PC-3 (cell line): ENCODE measurements at regions of chr1 and their contacts with region 1.

Region 1: GRCh38 chr1:29639741-29640427 is 403.6 kb downstream of the PTPRU start:
- DNase-seq: peak; percentile 76
- ATAC-seq: peak; percentile 70
- H3K4me3 ChIP-seq: no peak overlapping the region
- H3K27ac ChIP-seq: peak overlapping the region; percentile 58
- H3K4me1 ChIP-seq: peaks cover 45% of the 10 kb centered on the region
- H3K27me3 ChIP-seq: no peaks in the 10 kb centered on the region
- CTCF ChIP-seq: no peak

Region 2: GRCh38 chr1:29230553-29231378 is 409.1 kb before region 1 on chr1 and contains the start of gene MECR:
- CTCF ChIA-PET with region 1: no interaction called
- POLR2A ChIA-PET with region 1: no interaction called
- intact Hi-C with region 1: loop called (anchors 10 kb)
- DNase-seq: peak; percentile 92
- ATAC-seq: peak; percentile 94
- H3K4me3 ChIP-seq: peak within 1 kb of the TSS; percentile 85
- H3K27ac ChIP-seq: peak within 1 kb of the TSS; percentile 2; the same call in 1 of the 2 replicates
- H3K4me1 ChIP-seq: peaks cover 10% of the 10 kb centered on the region
- H3K27me3 ChIP-seq: no peaks in the 10 kb centered on the region
- CTCF ChIP-seq: peak; percentile 43; the same call in 1 of the 2 replicates
- total RNA-seq, gene MECR: 25.3 and 30.5 TPM in 2 replicates

Region 3: DNA sequence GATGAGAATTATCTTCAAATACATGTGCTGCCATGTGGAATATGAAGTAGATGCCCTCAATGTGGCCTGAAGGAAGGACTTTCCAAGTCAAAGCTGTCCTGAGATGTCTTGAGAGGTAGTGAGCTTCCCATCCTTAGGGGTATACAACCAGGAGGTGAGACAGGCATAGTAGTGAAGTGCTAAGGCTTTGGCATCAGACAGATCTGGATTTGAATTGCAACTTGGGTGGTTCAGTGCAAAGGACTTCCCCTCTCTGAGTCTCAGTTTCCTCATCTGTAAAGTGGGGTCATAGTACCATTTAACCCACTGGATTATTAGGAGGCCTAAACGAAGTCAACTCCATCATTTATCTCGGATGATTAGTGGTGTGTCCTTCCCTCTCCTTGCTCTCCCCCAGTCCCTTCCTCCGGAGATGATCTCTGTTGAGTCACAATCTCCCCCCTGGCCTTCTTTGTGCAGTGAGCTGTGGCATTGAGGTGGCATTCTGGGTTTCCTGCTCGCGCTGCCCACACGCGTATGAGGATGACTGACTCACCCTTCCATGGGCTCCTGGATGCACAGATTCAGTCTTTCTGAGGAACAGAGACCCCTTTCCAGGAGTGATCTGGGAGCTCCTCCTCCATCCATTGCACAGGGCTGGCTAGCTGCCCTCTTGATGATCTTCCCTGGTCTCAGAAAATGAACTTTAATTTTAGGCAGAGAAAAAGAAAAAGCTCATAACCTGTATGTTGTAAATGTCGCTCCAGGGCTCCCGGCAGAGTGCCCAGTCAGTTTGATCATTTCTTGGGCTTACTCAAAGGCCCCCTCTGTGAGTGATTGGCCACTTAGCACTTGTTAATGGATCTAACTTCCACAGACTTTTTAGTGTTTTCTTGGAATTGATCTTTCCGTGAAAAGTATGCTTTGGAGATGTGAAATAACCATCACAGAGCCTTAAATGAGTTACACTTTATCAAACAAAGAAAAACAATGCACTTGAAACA is 49.0 kb before region 1 on chr1:
- CTCF ChIA-PET with region 1: no interaction called
- POLR2A ChIA-PET with region 1: interaction called, 3 read pairs
- intact Hi-C with region 1: loop called (anchors 1 kb)
- DNase-seq: peak; percentile 97
- ATAC-seq: peak; percentile 94
- H3K4me3 ChIP-seq: no peak overlapping the region
- H3K27ac ChIP-seq: peak overlapping the region; percentile 86
- H3K4me1 ChIP-seq: peaks cover 38% of the 10 kb centered on the region
- H3K27me3 ChIP-seq: no peaks in the 10 kb centered on the region
- CTCF ChIP-seq: no peak

Region 4: DNA sequence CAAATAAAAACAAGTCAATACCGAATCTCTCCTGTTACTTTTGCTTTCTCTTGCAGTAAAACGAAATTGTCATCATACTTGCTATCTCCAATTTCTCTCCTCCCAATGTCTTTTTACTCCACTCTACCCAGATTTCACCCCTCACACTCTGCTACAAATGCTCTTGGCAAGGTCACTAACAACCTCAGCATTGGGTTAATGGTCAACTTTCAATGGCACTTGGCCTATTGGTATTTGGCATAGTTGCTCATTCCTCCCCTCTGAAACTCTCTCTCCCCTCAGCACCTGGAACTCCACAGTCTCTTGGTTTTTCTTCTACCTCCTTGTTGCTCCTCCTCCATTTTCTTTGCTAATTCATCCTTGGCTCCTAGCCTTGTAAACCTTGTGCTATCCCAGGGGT is 36.3 kb before region 1 on chr1:
- CTCF ChIA-PET with region 1: no interaction called
- POLR2A ChIA-PET with region 1: no interaction called
- intact Hi-C with region 1: no loop called
- DNase-seq: no peak
- ATAC-seq: no peak
- H3K4me3 ChIP-seq: no peak overlapping the region
- H3K27ac ChIP-seq: no peak overlapping the region
- H3K4me1 ChIP-seq: no peaks in the 10 kb centered on the region
- H3K27me3 ChIP-seq: no peaks in the 10 kb centered on the region
- CTCF ChIP-seq: no peak

Region 5: GRCh38 chr1:29682919-29683295 is 43.0 kb after region 1 on chr1:
- CTCF ChIA-PET with region 1: interaction called, 3 read pairs
- POLR2A ChIA-PET with region 1: no interaction called
- intact Hi-C with region 1: loop called (anchors 2 kb)
- DNase-seq: peak; percentile 83
- ATAC-seq: peak; percentile 93
- H3K4me3 ChIP-seq: no peak overlapping the region
- H3K27ac ChIP-seq: peak overlapping the region; percentile 60
- H3K4me1 ChIP-seq: peaks cover 29% of the 10 kb centered on the region
- H3K27me3 ChIP-seq: no peaks in the 10 kb centered on the region
- CTCF ChIP-seq: no peak

Region 6: GRCh38 chr1:29708901-29709710 is 69.2 kb after region 1 on chr1:
- CTCF ChIA-PET with region 1: no interaction called
- POLR2A ChIA-PET with region 1: no interaction called
- intact Hi-C with region 1: loop called (anchors 2 kb)
- DNase-seq: peak; percentile 93
- ATAC-seq: peak; percentile 68
- H3K4me3 ChIP-seq: peak overlapping the region; percentile 14; the same call in 1 of the 2 replicates
- H3K27ac ChIP-seq: peak overlapping the region; percentile 98
- H3K4me1 ChIP-seq: peaks cover 52% of the 10 kb centered on the region
- H3K27me3 ChIP-seq: no peaks in the 10 kb centered on the region
- CTCF ChIP-seq: no peak

Region 7: DNA sequence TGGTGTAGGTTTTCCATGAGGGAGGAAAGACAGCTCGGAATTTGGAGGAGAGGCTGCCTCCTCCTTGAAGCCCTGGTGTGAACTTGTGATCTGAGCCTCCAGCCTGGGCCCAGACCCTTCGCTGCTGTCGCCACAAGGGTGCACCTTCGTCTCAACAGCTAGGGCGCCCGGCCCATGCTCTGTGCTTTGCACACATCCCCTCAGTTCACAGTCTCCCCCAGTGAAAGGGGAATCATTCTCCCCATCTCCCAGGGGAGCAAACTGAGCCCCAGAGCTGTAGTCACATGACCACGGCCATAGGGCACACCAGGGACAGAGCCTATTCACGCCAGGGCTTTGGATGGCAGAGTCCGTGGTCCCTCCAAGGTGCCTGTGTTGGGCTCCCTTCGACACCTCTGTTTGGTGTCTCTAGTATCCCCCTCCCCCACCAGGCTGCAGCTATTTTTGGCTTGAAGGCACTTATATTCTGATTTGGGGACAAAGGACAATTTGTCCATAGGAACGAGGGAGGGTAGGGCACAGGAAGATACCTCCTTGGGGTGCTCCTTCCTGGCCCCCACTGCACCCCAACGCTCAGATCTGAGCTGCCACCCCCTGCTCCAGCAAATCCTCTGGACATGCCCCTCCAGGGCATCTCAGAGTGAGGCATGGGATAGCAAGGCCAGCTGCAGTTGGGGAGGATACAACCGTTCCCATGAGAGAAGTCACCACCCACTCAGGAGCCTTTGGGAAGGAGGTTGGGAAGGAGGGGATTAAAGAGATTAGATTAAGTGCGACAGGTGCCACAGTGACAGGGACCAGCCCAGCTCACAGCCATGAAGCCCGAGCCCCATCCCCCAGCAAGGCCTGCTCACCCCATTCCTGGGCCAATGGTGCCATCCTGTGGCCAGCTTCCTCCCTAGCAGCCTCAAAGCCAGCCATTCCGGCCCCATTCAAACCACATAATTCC is 1067.8 kb after region 1 on chr1:
- CTCF ChIA-PET with region 1: no interaction called
- POLR2A ChIA-PET with region 1: no interaction called
- intact Hi-C with region 1: loop called (anchors 5 kb)
- DNase-seq: peak; percentile 77
- ATAC-seq: peak; percentile 93
- H3K4me3 ChIP-seq: no peak overlapping the region
- H3K27ac ChIP-seq: no peak overlapping the region
- H3K4me1 ChIP-seq: no peaks in the 10 kb centered on the region
- H3K27me3 ChIP-seq: peaks cover 8% of the 10 kb centered on the region; the same call in 1 of the 2 replicates
- CTCF ChIP-seq: peak; percentile 90